ENCODE measurements at regions of chr4 and their contacts with region 1.

Region 1: GRCh38 chr4:151362404-151363164 is 37.2 kb upstream of the SH3D19 start:
- DNase-seq: peak; percentile 91
- ATAC-seq: peak; percentile 99
- H3K4me3 Mint-ChIP-seq: no peak overlapping the region
- H3K27ac Mint-ChIP-seq: no peak overlapping the region
- H3K4me1 Mint-ChIP-seq: peaks cover 7% of the 10 kb centered on the region; the same call in 1 of the 2 replicates
- H3K27me3 Mint-ChIP-seq: no peaks in the 10 kb centered on the region
- CTCF ChIP-seq: peak; percentile 85

Region 2: DNA sequence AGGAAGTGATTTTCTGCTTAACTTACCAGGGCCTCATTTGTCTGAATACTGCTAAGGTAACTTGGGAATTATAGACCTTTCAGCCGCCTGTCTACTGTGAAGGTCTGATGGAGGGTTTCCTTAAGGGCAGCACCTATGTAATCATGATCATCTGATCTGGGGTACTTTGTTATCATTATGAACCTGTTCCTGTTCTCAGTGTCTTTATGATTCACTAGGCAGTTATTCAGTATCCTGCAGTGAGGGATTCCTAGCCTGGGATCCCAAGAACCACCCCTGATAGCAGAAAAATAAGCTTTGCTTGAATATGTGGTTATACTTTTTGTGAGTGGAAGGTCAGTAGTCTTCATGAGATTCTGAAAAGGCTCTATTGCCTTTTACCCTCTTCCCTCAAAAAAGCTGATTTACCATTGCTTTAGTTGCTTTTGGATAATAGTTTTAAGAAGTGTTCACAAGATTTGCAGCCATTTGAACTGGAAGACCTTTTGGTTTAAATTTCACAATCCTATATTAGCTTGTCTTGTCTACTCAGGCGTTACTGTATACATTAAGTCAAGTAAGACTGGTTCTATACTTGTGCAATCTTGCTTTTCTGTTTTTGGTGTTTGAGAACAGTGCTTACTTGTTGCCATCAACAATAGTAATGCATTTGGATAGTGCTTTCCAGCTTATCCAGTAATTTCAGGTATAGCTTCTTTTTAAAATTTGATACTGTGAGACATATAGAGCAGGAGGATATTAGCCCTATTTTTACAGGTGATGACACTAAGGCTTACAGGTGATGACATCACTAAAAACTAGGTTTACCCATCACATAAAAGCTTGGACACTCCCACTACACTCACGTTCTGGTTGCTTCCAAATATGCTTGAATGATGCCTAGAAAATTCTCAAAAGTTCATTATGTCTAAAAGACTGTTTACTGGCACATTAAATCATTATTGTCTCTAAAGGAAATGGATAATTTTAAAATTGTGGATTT is 106.4 kb after region 1 on chr4:
- CTCF ChIA-PET with region 1: no interaction called
- POLR2A ChIA-PET with region 1: interaction called, 10 read pairs
- DNase-seq: no peak
- ATAC-seq: no peak
- H3K4me3 Mint-ChIP-seq: no peak overlapping the region
- H3K27ac Mint-ChIP-seq: peak overlapping the region; percentile 17
- H3K4me1 Mint-ChIP-seq: peaks cover 53% of the 10 kb centered on the region
- H3K27me3 Mint-ChIP-seq: no peaks in the 10 kb centered on the region
- CTCF ChIP-seq: no peak

Region 3: GRCh38 chr4:151604238-151604637 is 241.7 kb after region 1 on chr4:
- CTCF ChIA-PET with region 1: interaction called, 13 read pairs
- POLR2A ChIA-PET with region 1: no interaction called
- DNase-seq: no peak
- ATAC-seq: peak; percentile 82
- H3K4me3 Mint-ChIP-seq: no peak overlapping the region
- H3K27ac Mint-ChIP-seq: peak overlapping the region; percentile 20; the same call in 1 of the 2 replicates
- H3K4me1 Mint-ChIP-seq: peaks cover 18% of the 10 kb centered on the region
- H3K27me3 Mint-ChIP-seq: no peaks in the 10 kb centered on the region
- CTCF ChIP-seq: no peak

Measured in WTC11 (cell line).